CD4-positive, alpha-beta T cell (primary cell): ENCODE measurements at regions of chr17 and their contacts with region 1.

Region 1: GRCh38 chr17:55513885-55514591 is 2.8 kb upstream of the SMIM36 start:
- DNase-seq: peak; percentile 25 to 79 (median 68)
- ATAC-seq: peak; percentile 57
- H3K4me3 ChIP-seq: no peak overlapping the region
- H3K4me3 Mint-ChIP-seq: no peak overlapping the region
- H3K27ac ChIP-seq: no peak overlapping the region
- H3K27ac Mint-ChIP-seq: no peak overlapping the region
- H3K4me1 ChIP-seq: no peaks in the 10 kb centered on the region
- H3K4me1 Mint-ChIP-seq: no peaks in the 10 kb centered on the region
- H3K27me3 ChIP-seq: peaks cover 0 to 8% of the 10 kb centered on the region in 2 experiments
- H3K27me3 Mint-ChIP-seq: peaks cover 6% of the 10 kb centered on the region
- CTCF ChIP-seq: peak; percentile 97

Region 2: DNA sequence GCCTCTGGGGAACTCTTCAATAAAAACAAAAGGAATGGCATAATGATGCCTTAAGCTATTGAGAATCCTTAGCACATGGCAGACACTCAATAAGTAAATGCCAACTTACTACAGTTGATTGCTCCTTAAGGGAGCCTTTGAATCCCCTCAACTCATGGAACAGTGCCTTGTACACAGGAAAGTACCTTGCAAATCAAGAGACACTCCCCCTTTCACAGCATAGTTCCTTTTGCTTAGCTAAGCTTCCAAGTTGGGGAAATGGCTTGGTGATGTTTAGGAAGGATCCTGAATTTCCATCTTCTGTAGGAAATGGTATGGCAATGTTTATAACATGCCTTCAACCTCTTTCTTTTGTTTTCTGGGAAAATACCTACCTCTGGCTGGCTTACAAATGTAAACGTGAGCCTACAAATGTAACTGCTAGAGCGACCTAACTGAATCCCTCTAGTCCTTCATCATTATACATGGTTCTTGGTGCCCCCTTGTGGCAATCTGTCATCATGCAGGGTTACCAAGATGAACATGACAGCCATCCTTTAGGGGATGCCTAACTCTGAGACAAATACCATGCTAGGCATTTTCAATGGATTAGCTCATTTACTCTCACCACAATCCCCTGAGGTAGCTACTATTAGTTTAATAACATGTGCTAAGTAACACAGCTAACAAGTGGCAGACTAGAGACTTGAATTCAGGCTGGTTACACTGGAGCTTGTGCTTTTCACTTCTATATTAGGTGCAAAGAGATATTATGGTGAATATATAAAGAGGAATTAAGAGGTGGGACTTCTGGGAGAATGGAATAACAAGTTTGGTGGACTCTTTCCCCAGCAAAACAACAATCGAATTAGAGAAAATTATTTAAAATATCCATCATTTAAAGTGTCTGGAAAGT is 157.4 kb before region 1 on chr17:
- CTCF ChIA-PET with region 1: interaction called, 3 read pairs
- POLR2A ChIA-PET with region 1: no interaction called
- intact Hi-C with region 1: loop called (anchors 5 to 10 kb)
- DNase-seq: peak; percentile 33 to 77 (median 57)
- ATAC-seq: peak; percentile 84
- H3K4me3 ChIP-seq: no peak overlapping the region
- H3K4me3 Mint-ChIP-seq: no peak overlapping the region
- H3K27ac ChIP-seq: no peak overlapping the region
- H3K27ac Mint-ChIP-seq: no peak overlapping the region
- H3K4me1 ChIP-seq: no peaks in the 10 kb centered on the region
- H3K4me1 Mint-ChIP-seq: peaks cover 6% of the 10 kb centered on the region
- H3K27me3 ChIP-seq: no peaks in the 10 kb centered on the region
- H3K27me3 Mint-ChIP-seq: peaks cover 10% of the 10 kb centered on the region
- CTCF ChIP-seq: peak; percentile 84

Region 3: GRCh38 chr17:55567240-55568214 is 53.5 kb after region 1 on chr17:
- CTCF ChIA-PET with region 1: no interaction called
- POLR2A ChIA-PET with region 1: no interaction called
- intact Hi-C with region 1: no loop called
- DNase-seq: no peak
- ATAC-seq: no peak
- H3K4me3 ChIP-seq: no peak overlapping the region
- H3K4me3 Mint-ChIP-seq: no peak overlapping the region
- H3K27ac ChIP-seq: no peak overlapping the region
- H3K27ac Mint-ChIP-seq: no peak overlapping the region
- H3K4me1 ChIP-seq: no peaks in the 10 kb centered on the region
- H3K4me1 Mint-ChIP-seq: no peaks in the 10 kb centered on the region
- H3K27me3 ChIP-seq: no peaks in the 10 kb centered on the region
- H3K27me3 Mint-ChIP-seq: peaks cover 6% of the 10 kb centered on the region
- CTCF ChIP-seq: no peak

Region 4: GRCh38 chr17:55673743-55674506 is 159.9 kb after region 1 on chr17:
- CTCF ChIA-PET with region 1: no interaction called
- POLR2A ChIA-PET with region 1: no interaction called
- intact Hi-C with region 1: no loop called
- DNase-seq: peak in 2 of 14 experiments; percentile 26 to 43
- ATAC-seq: no peak
- H3K4me3 ChIP-seq: no peak overlapping the region
- H3K4me3 Mint-ChIP-seq: no peak overlapping the region
- H3K27ac ChIP-seq: no peak overlapping the region
- H3K27ac Mint-ChIP-seq: no peak overlapping the region
- H3K4me1 ChIP-seq: no peaks in the 10 kb centered on the region
- H3K4me1 Mint-ChIP-seq: no peaks in the 10 kb centered on the region
- H3K27me3 ChIP-seq: peaks cover 0 to 2% of the 10 kb centered on the region in 2 experiments
- H3K27me3 Mint-ChIP-seq: peaks cover 35% of the 10 kb centered on the region
- CTCF ChIP-seq: no peak